ENCODE measurements at regions of chr9 and their contacts with region 1.

Region 1: GRCh38 chr9:119004620-119004994 is 364.6 kb downstream of the BRINP1 start:
- DNase-seq: peak; percentile 48 to 97
- H3K4me3 ChIP-seq: no peak overlapping the region
- H3K27ac ChIP-seq: peak overlapping the region; percentile 80 to 84
- H3K4me1 ChIP-seq: peaks cover 9 to 27% of the 10 kb centered on the region in 2 donors
- H3K27me3 ChIP-seq: no peaks in the 10 kb centered on the region
- CTCF ChIP-seq: no peak

Region 2: GRCh38 chr9:118577121-118577520 is 427.5 kb before region 1 on chr9:
- intact Hi-C with region 1: loop called (anchors 10 kb)
- DNase-seq: no peak
- H3K4me3 ChIP-seq: no peak overlapping the region
- H3K27ac ChIP-seq: peak overlapping the region; percentile 54 to 57
- H3K4me1 ChIP-seq: peaks cover 0 to 9% of the 10 kb centered on the region in 2 donors
- H3K27me3 ChIP-seq: no peaks in the 10 kb centered on the region
- CTCF ChIP-seq: no peak

Region 3: GRCh38 chr9:119027901-119028699 is 23.5 kb after region 1 on chr9:
- intact Hi-C with region 1: loop called (anchors 1 kb)
- DNase-seq: no peak
- H3K4me3 ChIP-seq: no peak overlapping the region
- H3K27ac ChIP-seq: peak overlapping the region; percentile 77 to 93
- H3K4me1 ChIP-seq: peaks cover 15 to 30% of the 10 kb centered on the region in 2 donors
- H3K27me3 ChIP-seq: no peaks in the 10 kb centered on the region
- CTCF ChIP-seq: no peak

Region 4: GRCh38 chr9:119959846-119960545 is 955.4 kb after region 1 on chr9:
- intact Hi-C with region 1: loop called (anchors 5 kb)
- DNase-seq: no peak
- H3K4me3 ChIP-seq: no peak overlapping the region
- H3K27ac ChIP-seq: peak overlapping the region; percentile 23 to 43
- H3K4me1 ChIP-seq: peaks cover 0 to 24% of the 10 kb centered on the region in 2 donors
- H3K27me3 ChIP-seq: no peaks in the 10 kb centered on the region
- CTCF ChIP-seq: no peak